ENCODE measurements at regions of chr13 and their contacts with region 1.

Region 1: GRCh38 chr13:78638216-78638615 is 20.7 kb downstream of the OBI1 start:
- DNase-seq: no peak
- ATAC-seq: no peak
- H3K4me3 ChIP-seq: no peak overlapping the region
- H3K27ac ChIP-seq: no peak overlapping the region
- H3K4me1 ChIP-seq: peaks cover 11% of the 10 kb centered on the region
- H3K27me3 ChIP-seq: no peaks in the 10 kb centered on the region
- CTCF ChIP-seq: no peak
- EP300 ChIP-seq: no peak
- POLR2A ChIP-seq: no peak
- RAD21 ChIP-seq: no peak

Region 2: DNA sequence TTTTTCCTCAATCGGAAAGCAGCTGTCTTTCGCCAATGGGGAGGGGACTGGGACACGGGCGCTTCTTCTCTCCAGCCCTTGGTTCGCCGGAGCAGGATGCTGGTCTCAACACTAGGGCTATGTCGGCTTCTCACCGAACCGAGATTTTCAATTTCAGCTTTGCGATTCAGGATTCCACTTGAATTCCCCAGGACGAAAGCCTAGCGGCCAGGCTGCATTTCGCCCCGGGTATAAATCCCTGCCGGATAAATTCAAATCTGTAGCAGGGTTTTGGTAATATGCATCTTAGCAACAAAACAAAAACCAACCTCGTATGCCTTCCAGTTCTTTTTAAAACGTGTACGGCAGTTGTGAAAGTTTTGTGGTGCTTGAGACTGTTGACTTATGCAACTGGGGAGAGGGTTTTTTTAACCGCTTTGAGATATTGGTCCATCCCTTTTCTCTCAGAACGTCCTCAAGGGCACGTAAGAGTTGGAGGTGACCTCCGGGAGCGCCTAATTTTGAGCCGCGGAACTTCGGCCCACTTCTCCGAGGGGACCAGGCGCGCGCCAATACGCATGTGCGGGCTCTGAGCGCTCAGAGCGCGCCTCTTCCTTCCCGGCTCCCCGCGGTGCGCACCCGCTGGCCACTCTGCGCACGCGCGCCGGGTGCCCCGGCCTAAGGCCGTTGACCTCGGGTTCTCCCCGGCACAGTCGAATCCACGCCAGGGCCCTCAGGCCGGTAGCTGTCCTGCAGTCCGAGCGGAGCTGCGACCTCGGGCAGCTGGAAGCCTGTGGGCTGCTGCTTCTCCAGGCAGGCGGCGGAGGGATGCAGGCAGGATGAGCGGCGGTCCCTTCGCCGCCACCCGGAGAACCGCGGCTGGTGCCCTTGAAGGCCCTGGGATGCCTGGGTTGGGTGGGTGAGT is 42.5 kb before region 1 on chr13:
- CTCF ChIA-PET with region 1: no interaction called
- POLR2A ChIA-PET with region 1: no interaction called
- RAD21 ChIA-PET with region 1: no interaction called
- SMC1A ChIA-PET with region 1: no interaction called
- in situ Hi-C with region 1: no loop called
- intact Hi-C with region 1: loop called (anchors 1 kb)
- DNase-seq: no peak
- ATAC-seq: no peak
- H3K4me3 ChIP-seq: peak overlapping the region; percentile 43; the same call in 1 of the 2 replicates
- H3K27ac ChIP-seq: no peak overlapping the region
- H3K4me1 ChIP-seq: no peaks in the 10 kb centered on the region; the same call in 1 of the 2 replicates
- H3K27me3 ChIP-seq: peaks cover 12 to 32% of the 10 kb centered on the region in 2 experiments
- CTCF ChIP-seq: no peak
- EP300 ChIP-seq: no peak
- POLR2A ChIP-seq: no peak
- RAD21 ChIP-seq: no peak

Measured in GM12878 (cell line).